Heart right ventricle (tissue), 16 donors: ENCODE measurements at regions of chr5 and their contacts with region 1.

Region 1: GRCh38 chr5:179907570-179908324 is at the start of gene TBC1D9B:
- DNase-seq: peak; percentile 54 to 79
- ATAC-seq: peak; percentile 86 to 96 (median 90)
- H3K4me3 ChIP-seq: peak within 1 kb of the TSS; percentile 1 to 74 (median 65)
- H3K27ac ChIP-seq: peak within 1 kb of the TSS; percentile 23 to 83 (median 79)
- H3K4me1 ChIP-seq: peaks cover 7 to 28% (median 20%) of the 10 kb centered on the region in 9 donors
- H3K27me3 ChIP-seq: no peaks in the 10 kb centered on the region
- CTCF ChIP-seq: peak; percentile 28 to 76 (median 45)
- total RNA-seq, gene TBC1D9B: 26.0 to 52.1 (median 33.7) TPM

Region 2: GRCh38 chr5:179763215-179763945 is 144.4 kb before region 1 on chr5:
- intact Hi-C with region 1: loop called in 2 of 10 experiments (anchors 5 to 10 kb)
- DNase-seq: peak; percentile 34 to 71
- ATAC-seq: peak in 7 of 8 donors; percentile 50 to 85 (median 80)
- H3K4me3 ChIP-seq: no peak overlapping the region
- H3K27ac ChIP-seq: peak overlapping the region in 3 of 10 donors; percentile 14 to 24 (median 16)
- H3K4me1 ChIP-seq: peaks cover 6 to 96% (median 77%) of the 10 kb centered on the region in 9 donors
- H3K27me3 ChIP-seq: no peaks in the 10 kb centered on the region
- CTCF ChIP-seq: peak; percentile 76 to 97 (median 87)

Region 3: DNA sequence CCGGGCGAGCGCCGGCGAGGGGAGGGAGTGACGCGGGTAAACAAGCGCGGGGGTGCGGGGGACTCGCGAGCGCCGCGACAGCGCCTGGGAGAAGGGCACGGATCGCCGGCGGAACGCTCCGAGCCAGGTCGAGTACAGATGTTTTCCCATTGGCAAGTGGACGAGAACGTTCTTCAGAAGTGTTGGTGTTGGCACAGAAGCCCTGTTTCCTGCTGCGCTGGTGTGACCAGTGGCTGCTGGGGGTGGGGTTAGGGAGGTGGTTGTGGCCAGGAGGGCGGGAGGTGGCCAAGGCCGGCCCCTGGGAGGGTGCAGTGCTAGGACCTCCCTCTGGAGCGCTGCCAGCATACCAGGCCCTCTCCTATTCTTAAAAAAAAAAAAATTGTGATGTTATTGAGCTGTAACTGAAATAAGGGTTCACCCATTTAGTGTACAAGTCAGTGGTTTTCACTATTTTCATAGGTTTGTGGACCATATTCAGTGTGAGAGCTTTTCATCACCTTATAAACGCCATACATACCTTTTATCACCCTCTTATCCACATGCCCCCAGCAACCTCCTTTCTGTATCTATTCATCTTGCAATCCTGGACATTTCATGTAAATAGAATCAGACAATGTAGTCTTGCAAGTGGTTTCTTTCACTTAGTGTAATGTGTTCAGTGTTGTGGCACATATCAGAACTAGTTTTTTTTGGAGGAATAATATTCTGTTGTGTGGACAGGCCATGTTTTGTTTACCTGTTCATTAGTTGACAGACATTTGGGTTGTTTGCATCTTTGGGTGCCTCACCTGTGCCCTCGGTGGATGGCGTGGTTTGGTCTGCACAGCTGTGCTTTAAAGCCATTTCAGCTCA is 85.9 kb before region 1 on chr5:
- intact Hi-C with region 1: loop called in 1 of 10 experiments (anchors 10 kb)
- DNase-seq: peak; percentile 96 to 98
- ATAC-seq: peak; percentile 74 to 85 (median 82)
- H3K4me3 ChIP-seq: peak overlapping the region; percentile 84 to 100 (median 97)
- H3K27ac ChIP-seq: peak overlapping the region; percentile 97 to 100 (median 100)
- H3K4me1 ChIP-seq: peaks cover 23 to 86% (median 74%) of the 10 kb centered on the region in 9 donors
- H3K27me3 ChIP-seq: no peaks in the 10 kb centered on the region
- CTCF ChIP-seq: no peak

Region 4: GRCh38 chr5:179870402-179870903 is 37.3 kb before region 1 on chr5:
- intact Hi-C with region 1: loop called in 2 of 10 experiments (anchors 1 to 5 kb)
- DNase-seq: peak; percentile 69 to 70
- ATAC-seq: peak; percentile 43 to 82 (median 70)
- H3K4me3 ChIP-seq: no peak overlapping the region
- H3K27ac ChIP-seq: peak overlapping the region in 4 of 10 donors; percentile 11 to 42 (median 23)
- H3K4me1 ChIP-seq: peaks cover 0 to 11% (median 0%) of the 10 kb centered on the region in 9 donors
- H3K27me3 ChIP-seq: no peaks in the 10 kb centered on the region
- CTCF ChIP-seq: peak in 7 of 9 donors; percentile 7 to 58 (median 39)